H1 (cell line): ENCODE measurements at regions of chr7 and their contacts with region 1.

Region 1: DNA sequence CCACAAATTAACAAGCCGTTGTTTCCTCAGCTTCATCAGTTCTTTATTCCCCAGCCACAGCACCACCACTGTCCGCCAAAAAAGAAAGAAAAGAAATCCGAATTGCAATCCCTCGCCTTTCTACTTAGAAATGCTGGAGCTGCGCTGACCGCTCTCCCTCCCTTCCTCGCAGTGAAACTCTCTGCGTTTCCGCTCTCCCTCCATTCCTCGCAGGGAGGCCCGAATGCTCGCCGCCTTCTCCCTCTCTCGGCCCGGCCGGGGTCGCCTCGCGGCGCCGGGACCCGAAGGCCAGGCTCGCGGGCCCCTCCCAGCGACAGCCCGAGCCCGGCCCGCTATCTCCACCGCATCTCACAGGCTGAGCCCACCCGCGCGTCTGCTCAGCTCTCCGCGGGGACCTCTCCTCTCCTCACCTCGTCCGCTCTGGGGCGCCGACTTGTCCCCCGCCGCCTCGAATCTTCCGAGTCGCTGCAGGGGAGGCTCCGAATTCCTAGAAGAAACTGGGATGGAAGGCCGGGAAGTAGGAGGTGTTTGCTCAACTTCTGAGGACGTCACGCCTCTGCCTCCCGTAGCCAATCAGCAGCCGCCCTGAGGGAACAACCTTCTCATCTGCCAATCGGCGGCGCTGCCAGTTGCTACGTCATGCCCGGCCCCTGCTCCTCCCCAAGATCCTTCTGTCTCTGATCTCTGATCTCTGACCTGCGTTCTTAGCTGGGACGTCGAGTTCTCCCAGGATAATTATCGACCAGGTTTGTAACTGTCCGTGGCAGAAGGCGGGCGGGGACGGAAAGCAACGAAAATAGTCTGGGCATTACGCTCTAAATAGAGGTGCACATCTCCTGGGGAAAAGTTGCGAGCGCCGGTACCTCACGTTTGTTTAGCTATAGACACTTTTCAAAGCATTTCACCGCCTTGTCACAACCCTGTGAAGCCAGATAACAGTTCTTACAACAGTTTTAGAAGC is at the start of gene AASS:
- DNase-seq: peak; percentile 93 to 94
- H3K4me3 ChIP-seq: peak within 1 kb of the TSS; percentile 86 to 98 (median 95)
- H3K27ac ChIP-seq: peak within 1 kb of the TSS; percentile 85
- H3K4me1 ChIP-seq: peaks cover 4 to 18% (median 12%) of the 10 kb centered on the region in 4 experiments; a peak in 6 of 7 replicates
- H3K27me3 ChIP-seq: no peaks in the 10 kb centered on the region
- CTCF ChIP-seq: no peak
- EP300 ChIP-seq: 0 out of 3 replicates have a peak, but pooled peaks of 1 of the 2 experiments have one; percentile 52
- POLR2A ChIP-seq: peak; percentile 80 to 89
- RAD21 ChIP-seq: no peak
- total RNA-seq, gene AASS: 383 and 394 TPM in 2 replicates

Region 2: GRCh38 chr7:121966276-121966934 is 177.6 kb before region 1 on chr7:
- CTCF ChIA-PET with region 1: no interaction called
- POLR2A ChIA-PET with region 1: no interaction called
- DNase-seq: no peak
- H3K4me3 ChIP-seq: no peak overlapping the region
- H3K27ac ChIP-seq: no peak overlapping the region
- H3K4me1 ChIP-seq: peaks cover 0 to 7% (median 4%) of the 10 kb centered on the region in 4 experiments; a peak in 3 of 7 replicates
- H3K27me3 ChIP-seq: no peaks in the 10 kb centered on the region
- CTCF ChIP-seq: no peak
- EP300 ChIP-seq: no peak
- POLR2A ChIP-seq: no peak
- RAD21 ChIP-seq: no peak

Region 3: GRCh38 chr7:122132341-122132740 is 11.7 kb before region 1 on chr7:
- CTCF ChIA-PET with region 1: no interaction called
- POLR2A ChIA-PET with region 1: interaction called, 18 read pairs
- DNase-seq: no peak
- H3K4me3 ChIP-seq: peak overlapping the region in 1 of 4 experiments; percentile 18; a peak in 1 of 8 replicates
- H3K27ac ChIP-seq: no peak overlapping the region
- H3K4me1 ChIP-seq: peaks cover 0 to 8% (median 4%) of the 10 kb centered on the region in 4 experiments; a peak in 5 of 7 replicates
- H3K27me3 ChIP-seq: no peaks in the 10 kb centered on the region
- CTCF ChIP-seq: no peak
- EP300 ChIP-seq: no peak
- POLR2A ChIP-seq: no peak
- RAD21 ChIP-seq: no peak

Region 4: GRCh38 chr7:122155566-122155965 is 11.5 kb after region 1 on chr7:
- CTCF ChIA-PET with region 1: interaction called, 3 read pairs
- POLR2A ChIA-PET with region 1: interaction called, 12 read pairs
- DNase-seq: no peak
- H3K4me3 ChIP-seq: no peak overlapping the region
- H3K27ac ChIP-seq: no peak overlapping the region
- H3K4me1 ChIP-seq: peaks cover 0 to 16% (median 5%) of the 10 kb centered on the region in 4 experiments; a peak in 4 of 7 replicates
- H3K27me3 ChIP-seq: no peaks in the 10 kb centered on the region
- CTCF ChIP-seq: no peak
- EP300 ChIP-seq: no peak
- POLR2A ChIP-seq: no peak
- RAD21 ChIP-seq: no peak

Region 5: GRCh38 chr7:122212754-122213153 is 68.7 kb after region 1 on chr7:
- CTCF ChIA-PET with region 1: no interaction called
- POLR2A ChIA-PET with region 1: no interaction called
- DNase-seq: no peak
- H3K4me3 ChIP-seq: no peak overlapping the region
- H3K27ac ChIP-seq: no peak overlapping the region
- H3K4me1 ChIP-seq: no peaks in the 10 kb centered on the region
- H3K27me3 ChIP-seq: no peaks in the 10 kb centered on the region
- CTCF ChIP-seq: no peak
- EP300 ChIP-seq: no peak
- POLR2A ChIP-seq: no peak
- RAD21 ChIP-seq: no peak

Region 6: DNA sequence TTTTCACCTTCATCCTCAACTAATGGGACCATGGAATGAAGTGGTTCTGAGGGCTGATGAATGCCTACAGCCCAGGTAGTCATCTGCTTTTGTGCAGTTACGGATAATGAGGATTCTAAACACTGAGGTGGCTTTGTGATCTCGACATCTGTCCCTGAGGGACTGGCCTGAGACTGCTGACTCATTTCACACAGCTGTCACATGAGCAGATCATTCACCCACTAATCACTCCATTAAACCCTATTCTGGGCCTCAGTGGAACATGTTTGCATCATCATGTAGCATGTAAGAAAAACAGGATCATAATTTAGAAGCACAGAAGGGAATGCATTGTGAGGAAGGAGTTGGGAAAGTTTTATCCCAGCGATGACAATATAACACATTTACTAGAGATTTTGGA is 239.9 kb after region 1 on chr7:
- CTCF ChIA-PET with region 1: no interaction called
- POLR2A ChIA-PET with region 1: no interaction called
- DNase-seq: no peak
- H3K4me3 ChIP-seq: no peak overlapping the region
- H3K27ac ChIP-seq: no peak overlapping the region
- H3K4me1 ChIP-seq: peaks cover 2 to 5% (median 2%) of the 10 kb centered on the region in 4 experiments; a peak in 5 of 7 replicates
- H3K27me3 ChIP-seq: no peaks in the 10 kb centered on the region
- CTCF ChIP-seq: no peak
- EP300 ChIP-seq: no peak
- POLR2A ChIP-seq: no peak
- RAD21 ChIP-seq: no peak